Pancreas (tissue), 10 donors: ENCODE measurements at regions of chr15 and their contacts with region 1.

Region 1: GRCh38 chr15:72312605-72313447 is 7.1 kb downstream of the CELF6 start:
- DNase-seq: peak; percentile 50 to 85 (median 76)
- ATAC-seq: peak; percentile 84 to 97 (median 95)
- H3K4me3 ChIP-seq: no peak overlapping the region
- H3K27ac ChIP-seq: no peak overlapping the region
- H3K4me1 ChIP-seq: no peaks in the 10 kb centered on the region
- H3K27me3 ChIP-seq: no peaks in the 10 kb centered on the region
- CTCF ChIP-seq: peak; percentile 37 to 64 (median 46)

Region 2: GRCh38 chr15:72521682-72522081 is 208.9 kb after region 1 on chr15:
- intact Hi-C with region 1: loop called in 1 of 3 experiments (anchors 10 kb)
- DNase-seq: no peak
- ATAC-seq: no peak
- H3K4me3 ChIP-seq: no peak overlapping the region
- H3K27ac ChIP-seq: no peak overlapping the region
- H3K4me1 ChIP-seq: peaks cover 0 to 1% (median 0%) of the 10 kb centered on the region in 3 donors
- H3K27me3 ChIP-seq: no peaks in the 10 kb centered on the region
- CTCF ChIP-seq: no peak